ENCODE measurements at regions of chr11 and their contacts with region 1.

Region 1: DNA sequence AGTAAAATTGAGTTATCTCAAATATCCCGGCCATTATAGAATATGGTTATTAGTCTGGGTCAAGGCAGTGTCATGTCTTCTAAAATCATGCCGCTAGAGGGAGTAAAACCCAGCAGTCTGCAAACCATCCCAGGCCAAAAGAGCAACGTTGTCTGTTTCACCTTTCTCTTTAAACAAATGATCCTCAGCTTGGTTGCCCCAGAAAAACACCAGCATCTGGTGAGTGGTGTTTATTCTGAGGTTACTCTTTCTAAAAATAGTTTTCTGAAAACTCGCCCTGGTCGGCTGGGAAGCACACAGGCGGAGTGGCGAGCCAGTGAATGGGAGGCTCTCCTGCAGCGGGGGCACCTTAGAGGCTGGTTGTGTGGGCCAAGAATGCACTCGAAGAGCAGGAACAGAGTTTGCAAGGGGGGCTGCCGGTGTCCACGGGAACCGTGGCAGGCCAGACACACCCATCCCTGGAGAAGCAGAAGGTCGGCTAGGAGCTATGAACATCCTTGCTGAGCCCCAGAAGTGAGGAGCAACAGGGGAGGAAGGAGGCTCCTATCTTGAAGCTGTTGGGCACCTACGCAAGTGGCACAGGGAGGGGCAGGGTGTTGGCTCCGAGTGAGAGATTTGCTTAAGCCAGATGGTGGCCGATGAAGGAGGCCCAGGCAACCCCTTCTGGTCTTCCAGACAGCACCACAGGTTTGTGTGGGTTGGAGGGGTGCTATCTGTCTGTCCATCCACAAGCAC is 297.1 kb downstream of the ETS1 start:
- DNase-seq: peak; percentile 46 to 73 (median 70)
- ATAC-seq: peak; percentile 74 to 91 (median 88)
- H3K4me3 ChIP-seq: peak overlapping the region in 9 of 12 donors; percentile 4 to 44 (median 18)
- H3K27ac ChIP-seq: peak overlapping the region in 9 of 12 donors; percentile 27 to 87 (median 51)
- H3K4me1 ChIP-seq: peaks cover 3 to 52% (median 27%) of the 10 kb centered on the region in 12 donors
- H3K27me3 ChIP-seq: no peaks in the 10 kb centered on the region
- CTCF ChIP-seq: peak; percentile 83 to 91 (median 86)
- POLR2A ChIP-seq: peak in 1 of 2 donors; percentile 18

Region 2: DNA sequence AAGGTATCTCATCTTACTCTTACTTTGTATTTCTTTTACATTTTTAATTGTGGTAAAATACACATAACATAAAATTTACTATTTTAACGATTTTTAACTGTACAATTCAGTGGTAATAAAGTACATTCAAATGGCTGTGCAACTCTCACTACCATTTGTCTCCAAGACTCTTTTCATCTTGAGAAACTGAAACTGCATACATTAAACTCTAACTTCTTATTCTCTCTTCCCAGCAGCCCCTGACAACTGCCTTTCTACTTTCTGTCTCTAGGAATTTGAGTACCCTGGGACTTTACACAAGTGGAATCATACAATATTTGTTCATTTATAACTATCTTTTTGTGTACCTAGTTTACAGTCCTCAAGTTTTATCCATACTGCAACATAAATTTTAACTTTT is 563.9 kb before region 1 on chr11:
- intact Hi-C with region 1: no loop called
- DNase-seq: no peak
- ATAC-seq: no peak
- H3K4me3 ChIP-seq: no peak overlapping the region
- H3K27ac ChIP-seq: no peak overlapping the region
- H3K4me1 ChIP-seq: no peaks in the 10 kb centered on the region
- H3K27me3 ChIP-seq: no peaks in the 10 kb centered on the region
- CTCF ChIP-seq: no peak
- POLR2A ChIP-seq: no peak

Region 3: DNA sequence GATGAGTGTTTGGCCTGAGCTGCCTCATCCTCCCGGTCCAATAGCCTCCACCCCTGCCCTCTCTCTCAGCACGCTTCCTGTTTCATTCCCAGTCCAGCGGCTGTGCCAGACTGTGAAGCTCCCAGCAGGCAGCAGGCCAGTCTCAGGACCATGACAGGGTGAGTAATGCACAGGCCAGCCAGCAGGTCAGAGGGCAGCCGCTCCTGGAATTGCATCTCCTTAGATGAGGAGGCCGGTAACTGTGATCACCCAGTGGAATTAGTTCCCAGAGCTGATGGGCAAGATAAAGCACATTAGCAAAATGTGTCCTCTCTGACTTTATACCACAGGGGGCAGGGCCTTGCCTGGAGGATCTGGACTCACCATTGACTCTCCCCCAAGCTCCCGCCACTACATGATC is 45.9 kb after region 1 on chr11:
- intact Hi-C with region 1: loop called in 2 of 10 experiments (anchors 2 to 5 kb)
- DNase-seq: peak; percentile 48 to 78 (median 50)
- ATAC-seq: peak in 3 of 4 donors; percentile 54 to 85 (median 78)
- H3K4me3 ChIP-seq: no peak overlapping the region
- H3K27ac ChIP-seq: peak overlapping the region in 9 of 12 donors; percentile 14 to 85 (median 74)
- H3K4me1 ChIP-seq: peaks cover 0 to 45% (median 23%) of the 10 kb centered on the region in 12 donors
- H3K27me3 ChIP-seq: no peaks in the 10 kb centered on the region
- CTCF ChIP-seq: no peak
- POLR2A ChIP-seq: no peak

Region 4: DNA sequence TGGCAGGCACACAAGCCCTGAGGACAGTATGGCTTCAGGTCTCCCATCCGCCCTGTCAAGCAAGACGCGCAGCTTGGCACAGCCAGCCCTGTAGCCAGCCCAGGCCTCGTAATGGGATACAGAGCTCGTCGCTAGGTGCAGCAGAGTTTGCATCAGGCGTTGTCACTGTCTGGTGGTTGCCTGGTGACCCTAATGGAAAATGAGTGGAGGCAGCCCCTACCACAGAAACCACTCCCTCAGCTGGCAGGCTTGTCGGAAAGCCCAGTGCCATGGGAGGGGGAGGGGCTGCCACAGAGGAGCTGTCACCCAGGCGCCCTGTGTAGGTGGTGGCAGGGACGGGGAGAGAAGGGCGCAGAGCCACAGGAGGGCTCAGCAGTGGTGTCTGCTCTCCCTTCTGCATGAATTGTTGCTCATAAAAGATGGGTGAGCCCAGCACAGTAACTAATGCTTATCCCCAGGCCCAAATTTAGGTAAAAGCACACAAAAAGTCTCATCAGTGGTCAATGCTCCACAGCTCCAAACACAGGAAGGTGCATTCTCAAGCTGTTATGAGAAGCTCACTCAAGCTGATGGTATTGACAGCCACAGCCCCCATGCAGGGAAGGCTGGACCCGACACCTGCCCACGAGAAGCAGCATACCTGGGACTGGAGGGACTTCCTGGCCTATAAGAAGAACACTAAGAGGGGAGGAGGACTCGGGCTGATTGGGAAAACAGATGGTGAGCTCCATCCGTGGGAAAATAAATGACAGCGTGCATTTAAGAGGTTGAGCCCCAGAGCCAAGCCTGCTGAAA is 132.5 kb after region 1 on chr11:
- intact Hi-C with region 1: loop called in 2 of 10 experiments (anchors 10 kb)
- DNase-seq: peak in 4 of 5 donors; percentile 42 to 71 (median 53)
- ATAC-seq: peak; percentile 14 to 80 (median 68)
- H3K4me3 ChIP-seq: no peak overlapping the region
- H3K27ac ChIP-seq: peak overlapping the region in 9 of 12 donors; percentile 19 to 90 (median 71)
- H3K4me1 ChIP-seq: peaks cover 8 to 45% (median 34%) of the 10 kb centered on the region in 12 donors
- H3K27me3 ChIP-seq: no peaks in the 10 kb centered on the region
- CTCF ChIP-seq: no peak
- POLR2A ChIP-seq: no peak

Region 5: GRCh38 chr11:128506999-128507611 is 216.8 kb after region 1 on chr11:
- intact Hi-C with region 1: loop called in 2 of 10 experiments (anchors 10 kb)
- DNase-seq: peak; percentile 69 to 91 (median 83)
- ATAC-seq: peak; percentile 79 to 96 (median 88)
- H3K4me3 ChIP-seq: peak overlapping the region in 11 of 12 donors; percentile 4 to 47 (median 37)
- H3K27ac ChIP-seq: peak overlapping the region; percentile 60 to 96 (median 80)
- H3K4me1 ChIP-seq: peaks cover 24 to 100% (median 100%) of the 10 kb centered on the region in 12 donors
- H3K27me3 ChIP-seq: no peaks in the 10 kb centered on the region
- CTCF ChIP-seq: no peak
- POLR2A ChIP-seq: peak in 1 of 2 donors; percentile 75

Region 6: GRCh38 chr11:128630367-128631230 is 340.3 kb after region 1 on chr11:
- intact Hi-C with region 1: loop called (anchors 1 to 2 kb)
- DNase-seq: peak; percentile 86 to 94 (median 88)
- ATAC-seq: peak; percentile 74 to 93 (median 88)
- H3K4me3 ChIP-seq: no peak overlapping the region
- H3K27ac ChIP-seq: peak overlapping the region in 3 of 12 donors; percentile 12 to 80 (median 38)
- H3K4me1 ChIP-seq: peaks cover 0 to 48% (median 10%) of the 10 kb centered on the region in 12 donors
- H3K27me3 ChIP-seq: no peaks in the 10 kb centered on the region
- CTCF ChIP-seq: peak; percentile 82 to 94 (median 90)
- POLR2A ChIP-seq: no peak

Measured in heart left ventricle (tissue), 16 donors.